Activated CD4-positive, alpha-beta T cell treated with anti-CD3 and anti-CD28 coated beads, Interleukin-2, amount 10 ng/mL, durations not matched to agents 7 days and 5 days (primary cell): ENCODE measurements at regions of chr1 and their contacts with region 1.

Region 1: DNA sequence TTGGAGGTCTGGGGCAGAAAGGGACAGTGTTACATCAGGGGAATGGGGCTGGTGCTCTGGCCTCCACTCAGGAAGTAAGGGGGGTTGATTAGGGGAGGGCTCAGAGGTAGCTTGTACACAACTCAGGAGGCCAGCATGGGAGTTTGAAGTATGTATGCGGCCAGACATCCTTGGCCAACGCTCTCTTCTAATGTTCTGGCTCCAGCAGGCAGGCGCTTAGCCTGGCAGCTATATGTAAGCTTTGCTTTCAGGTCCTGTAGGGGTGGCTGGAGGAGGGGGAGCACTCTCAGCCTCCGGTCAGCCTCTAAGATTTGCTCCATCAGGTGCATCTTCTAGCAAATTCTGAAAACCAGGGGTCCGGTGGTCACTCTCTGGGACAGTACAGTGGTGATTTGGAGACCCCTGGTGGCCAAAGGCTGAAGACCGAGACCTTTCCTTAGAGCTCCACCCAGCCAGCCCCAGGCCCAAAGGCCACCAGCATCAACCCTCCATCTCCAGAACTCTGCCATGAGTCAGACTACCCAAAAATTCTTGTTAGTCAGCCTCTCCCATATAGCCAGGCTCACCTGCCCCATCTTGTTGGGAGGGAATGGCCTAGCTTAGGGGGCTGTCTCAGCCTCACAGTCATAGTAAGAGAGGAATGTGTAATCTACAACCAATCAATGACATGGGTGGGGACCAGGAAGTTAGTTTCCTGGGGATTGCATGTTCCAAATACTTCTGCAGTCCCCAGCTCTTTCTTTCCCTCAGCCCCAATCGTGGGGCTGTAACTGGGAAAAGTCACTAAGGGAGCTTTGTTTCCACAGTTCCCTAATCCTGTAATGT is 9.7 kb upstream of the COL8A2 start:
- DNase-seq: peak; percentile 46
- H3K4me3 Mint-ChIP-seq: no peak overlapping the region
- H3K27ac Mint-ChIP-seq: no peak overlapping the region
- H3K4me1 Mint-ChIP-seq: peaks cover 11% of the 10 kb centered on the region
- H3K27me3 Mint-ChIP-seq: no peaks in the 10 kb centered on the region

Region 2: GRCh38 chr1:36099681-36100341 is 34.9 kb before region 1 on chr1:
- CTCF ChIA-PET with region 1: interaction called, 25 read pairs
- POLR2A ChIA-PET with region 1: interaction called, 3 read pairs
- DNase-seq: peak; percentile 81
- H3K4me3 Mint-ChIP-seq: no peak overlapping the region
- H3K27ac Mint-ChIP-seq: no peak overlapping the region
- H3K4me1 Mint-ChIP-seq: peaks cover 3% of the 10 kb centered on the region
- H3K27me3 Mint-ChIP-seq: no peaks in the 10 kb centered on the region

Region 3: GRCh38 chr1:36109041-36109679 is 25.6 kb before region 1 on chr1:
- CTCF ChIA-PET with region 1: interaction called, 12 read pairs
- POLR2A ChIA-PET with region 1: interaction called, 3 read pairs
- DNase-seq: peak; percentile 67
- H3K4me3 Mint-ChIP-seq: no peak overlapping the region
- H3K27ac Mint-ChIP-seq: peak overlapping the region; percentile 91
- H3K4me1 Mint-ChIP-seq: peaks cover 31% of the 10 kb centered on the region
- H3K27me3 Mint-ChIP-seq: no peaks in the 10 kb centered on the region

Region 4: GRCh38 chr1:36119456-36119855 is 15.3 kb before region 1 on chr1:
- CTCF ChIA-PET with region 1: interaction called, 12 read pairs
- POLR2A ChIA-PET with region 1: no interaction called
- DNase-seq: no peak
- H3K4me3 Mint-ChIP-seq: no peak overlapping the region
- H3K27ac Mint-ChIP-seq: no peak overlapping the region
- H3K4me1 Mint-ChIP-seq: peaks cover 13% of the 10 kb centered on the region
- H3K27me3 Mint-ChIP-seq: peaks cover 28% of the 10 kb centered on the region

Region 5: DNA sequence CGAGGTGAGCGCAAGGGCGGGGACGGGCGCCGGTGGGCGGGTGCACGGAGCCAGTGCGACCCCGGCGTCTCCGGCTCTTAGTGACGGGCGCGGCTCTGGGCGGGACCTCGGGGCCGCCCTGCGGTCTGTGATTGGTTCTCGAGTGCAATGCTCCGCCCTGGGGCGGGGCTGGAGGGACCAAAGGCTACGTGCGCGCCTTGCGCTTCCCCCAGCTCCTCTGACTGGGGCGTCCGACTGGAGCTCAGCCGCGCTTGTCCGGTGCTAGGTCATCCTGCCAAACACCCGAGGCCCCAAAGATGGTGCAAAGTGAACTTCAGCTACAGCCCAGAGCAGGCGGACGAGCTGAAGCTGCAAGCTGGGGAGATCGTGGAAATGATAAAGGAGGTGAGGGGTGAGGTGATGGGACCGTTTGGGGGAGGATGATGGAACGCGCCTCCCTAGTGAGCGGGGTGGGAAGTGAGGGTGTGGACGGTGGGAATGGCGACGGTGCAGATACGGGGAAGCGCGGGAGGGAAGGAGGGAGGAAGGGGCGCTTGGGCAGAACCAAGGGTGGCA is 172.3 kb after region 1 on chr1:
- CTCF ChIA-PET with region 1: no interaction called
- POLR2A ChIA-PET with region 1: no interaction called
- DNase-seq: peak; percentile 93
- H3K4me3 Mint-ChIP-seq: peak overlapping the region; percentile 98
- H3K27ac Mint-ChIP-seq: peak overlapping the region; percentile 86
- H3K4me1 Mint-ChIP-seq: peaks cover 31% of the 10 kb centered on the region
- H3K27me3 Mint-ChIP-seq: no peaks in the 10 kb centered on the region